ENCODE measurements at regions of chr1 and their contacts with region 1.

Region 1: GRCh38 chr1:158087320-158087927 is 93.3 kb upstream of the CD1D start:
- DNase-seq: peak; percentile 87 to 93 (median 90)
- H3K4me3 ChIP-seq: no peak overlapping the region
- H3K27ac ChIP-seq: no peak overlapping the region
- H3K4me1 ChIP-seq: peaks cover 0 to 2% (median 0%) of the 10 kb centered on the region in 4 experiments
- H3K27me3 ChIP-seq: no peaks in the 10 kb centered on the region

Region 2: GRCh38 chr1:157831968-157832626 is 255.3 kb before region 1 on chr1:
- CTCF ChIA-PET with region 1: no interaction called
- POLR2A ChIA-PET with region 1: no interaction called
- DNase-seq: no peak
- H3K4me3 ChIP-seq: no peak overlapping the region
- H3K27ac ChIP-seq: no peak overlapping the region
- H3K4me1 ChIP-seq: no peaks in the 10 kb centered on the region
- H3K27me3 ChIP-seq: no peaks in the 10 kb centered on the region

Region 3: DNA sequence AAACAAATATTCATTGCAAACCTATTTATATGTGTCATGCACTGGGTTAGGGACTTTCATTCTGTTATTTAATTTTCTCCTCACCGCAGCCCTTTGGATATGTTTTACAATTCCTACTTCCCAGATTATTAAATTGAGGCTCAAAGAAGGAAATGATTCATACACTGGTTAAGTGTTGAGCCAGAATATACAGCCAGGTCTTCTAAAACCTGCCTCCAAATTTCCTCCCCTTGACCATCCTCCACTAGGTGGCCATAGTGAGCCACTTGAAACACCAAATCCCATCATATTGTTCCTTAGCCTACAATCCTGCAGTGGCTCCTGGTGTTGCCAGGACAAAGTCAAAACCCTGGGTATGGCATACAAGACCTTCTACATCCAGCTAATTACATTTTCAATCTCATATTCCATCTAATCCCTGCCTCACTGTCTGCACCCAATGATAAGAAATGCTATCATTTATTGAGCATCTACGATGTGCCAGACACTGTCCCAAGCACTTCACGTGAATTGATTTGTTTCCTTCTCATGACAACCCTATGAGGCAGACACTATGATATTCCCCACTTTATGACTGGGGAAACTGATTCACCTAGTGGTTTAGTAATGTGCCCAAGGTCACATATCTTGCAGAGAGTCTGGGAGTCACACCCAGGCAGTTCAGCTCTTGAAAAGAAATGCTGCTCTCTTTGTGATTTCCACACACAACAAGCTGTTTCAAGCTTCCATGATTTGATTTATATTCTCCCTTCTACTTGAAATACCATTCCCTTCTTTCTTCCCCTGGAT is 117.5 kb before region 1 on chr1:
- CTCF ChIA-PET with region 1: interaction called, 11 read pairs
- POLR2A ChIA-PET with region 1: no interaction called
- DNase-seq: peak; percentile 45 to 58 (median 46)
- H3K4me3 ChIP-seq: no peak overlapping the region
- H3K27ac ChIP-seq: no peak overlapping the region
- H3K4me1 ChIP-seq: peaks cover 0 to 8% (median 3%) of the 10 kb centered on the region in 4 experiments
- H3K27me3 ChIP-seq: no peaks in the 10 kb centered on the region

Region 4: GRCh38 chr1:158035976-158036583 is 51.3 kb before region 1 on chr1:
- CTCF ChIA-PET with region 1: interaction called, 14 read pairs
- POLR2A ChIA-PET with region 1: no interaction called
- DNase-seq: peak; percentile 66 to 77 (median 66)
- H3K4me3 ChIP-seq: no peak overlapping the region
- H3K27ac ChIP-seq: no peak overlapping the region
- H3K4me1 ChIP-seq: peaks cover 0 to 8% (median 4%) of the 10 kb centered on the region in 4 experiments
- H3K27me3 ChIP-seq: no peaks in the 10 kb centered on the region